ENCODE measurements at regions of chr10 and their contacts with region 1.

Region 1: GRCh38 chr10:122565728-122566206 is 5.2 kb downstream of the DMBT1 start:
- DNase-seq: peak; percentile 46 to 87
- ATAC-seq: peak in 1 of 3 donors; percentile 61
- H3K4me3 ChIP-seq: no peak overlapping the region
- H3K4me3 Mint-ChIP-seq: no peak overlapping the region
- H3K27ac ChIP-seq: no peak overlapping the region
- H3K27ac Mint-ChIP-seq: no peak overlapping the region
- H3K4me1 ChIP-seq: no peaks in the 10 kb centered on the region
- H3K4me1 Mint-ChIP-seq: no peaks in the 10 kb centered on the region
- H3K27me3 ChIP-seq: no peaks in the 10 kb centered on the region
- H3K27me3 Mint-ChIP-seq: peaks cover 21 to 34% of the 10 kb centered on the region in 2 donors
- CTCF ChIP-seq: peak; percentile 66

Region 2: GRCh38 chr10:122342293-122343134 is 223.3 kb before region 1 on chr10:
- intact Hi-C with region 1: loop called (anchors 1 kb)
- DNase-seq: peak; percentile 39 to 81
- ATAC-seq: peak; percentile 57 to 82 (median 78)
- H3K4me3 ChIP-seq: no peak overlapping the region
- H3K4me3 Mint-ChIP-seq: no peak overlapping the region
- H3K27ac ChIP-seq: no peak overlapping the region
- H3K27ac Mint-ChIP-seq: no peak overlapping the region
- H3K4me1 ChIP-seq: no peaks in the 10 kb centered on the region
- H3K4me1 Mint-ChIP-seq: peaks cover 7 to 19% of the 10 kb centered on the region in 2 donors
- H3K27me3 ChIP-seq: no peaks in the 10 kb centered on the region
- H3K27me3 Mint-ChIP-seq: no peaks in the 10 kb centered on the region
- CTCF ChIP-seq: peak; percentile 85

Region 3: DNA sequence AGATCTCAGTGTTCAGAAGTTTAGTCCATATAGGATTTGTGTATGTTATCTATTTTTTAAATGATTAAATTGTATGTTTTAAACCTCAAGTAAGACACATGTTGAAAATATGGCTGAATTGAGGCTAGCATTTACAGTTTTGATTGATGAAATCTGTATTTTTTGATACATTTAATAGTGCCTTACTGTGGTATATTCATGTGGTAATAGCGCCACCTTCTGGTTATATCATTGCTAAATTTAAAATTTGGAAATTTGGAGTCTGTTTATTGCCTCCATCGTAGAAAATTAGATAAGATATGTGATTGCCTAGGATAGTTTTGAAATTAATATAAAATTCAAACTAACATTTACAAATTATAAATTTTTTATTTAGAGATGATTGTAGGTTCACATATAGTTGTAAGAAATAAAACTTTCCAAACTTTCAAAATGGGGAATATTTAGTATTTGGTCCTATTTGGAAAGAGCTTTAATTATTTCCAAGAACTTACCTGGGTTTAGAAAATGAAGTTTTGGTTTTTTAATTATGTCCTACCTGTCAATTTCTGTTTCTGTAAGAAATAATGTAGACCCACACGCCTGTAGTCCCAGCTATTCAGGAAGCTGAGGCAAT is 130.4 kb before region 1 on chr10:
- intact Hi-C with region 1: loop called (anchors 5 kb)
- DNase-seq: peak in 1 of 2 donors; percentile 78
- ATAC-seq: peak; percentile 42 to 67 (median 58)
- H3K4me3 ChIP-seq: no peak overlapping the region
- H3K4me3 Mint-ChIP-seq: no peak overlapping the region
- H3K27ac ChIP-seq: no peak overlapping the region
- H3K27ac Mint-ChIP-seq: no peak overlapping the region
- H3K4me1 ChIP-seq: no peaks in the 10 kb centered on the region
- H3K4me1 Mint-ChIP-seq: peaks cover 0 to 7% of the 10 kb centered on the region in 2 donors
- H3K27me3 ChIP-seq: no peaks in the 10 kb centered on the region
- H3K27me3 Mint-ChIP-seq: no peaks in the 10 kb centered on the region
- CTCF ChIP-seq: peak; percentile 89

Region 4: GRCh38 chr10:122630526-122630925 is 64.8 kb after region 1 on chr10:
- intact Hi-C with region 1: no loop called
- DNase-seq: no peak
- ATAC-seq: no peak
- H3K4me3 ChIP-seq: no peak overlapping the region
- H3K4me3 Mint-ChIP-seq: no peak overlapping the region
- H3K27ac ChIP-seq: no peak overlapping the region
- H3K27ac Mint-ChIP-seq: no peak overlapping the region
- H3K4me1 ChIP-seq: no peaks in the 10 kb centered on the region
- H3K4me1 Mint-ChIP-seq: no peaks in the 10 kb centered on the region
- H3K27me3 ChIP-seq: no peaks in the 10 kb centered on the region
- H3K27me3 Mint-ChIP-seq: peaks cover 9 to 10% of the 10 kb centered on the region in 2 donors
- CTCF ChIP-seq: no peak

Measured in natural killer cell (primary cell).